GM12878 (cell line): ENCODE measurements at regions of chr14 and their contacts with region 1.

Region 1: GRCh38 chr14:58969951-58970751 is 218.3 kb upstream of the DAAM1 start:
- DNase-seq: peak; percentile 43
- ATAC-seq: peak; percentile 86
- H3K4me3 ChIP-seq: no peak overlapping the region
- H3K27ac ChIP-seq: peak overlapping the region; percentile 43
- H3K4me1 ChIP-seq: peaks cover 4% of the 10 kb centered on the region; the same call in 1 of the 2 replicates
- H3K27me3 ChIP-seq: no peaks in the 10 kb centered on the region
- CTCF ChIP-seq: no peak
- EP300 ChIP-seq: no peak
- POLR2A ChIP-seq: 0 out of 2 replicates have a peak, but pooled peaks have one; percentile 16
- RAD21 ChIP-seq: no peak

Region 2: DNA sequence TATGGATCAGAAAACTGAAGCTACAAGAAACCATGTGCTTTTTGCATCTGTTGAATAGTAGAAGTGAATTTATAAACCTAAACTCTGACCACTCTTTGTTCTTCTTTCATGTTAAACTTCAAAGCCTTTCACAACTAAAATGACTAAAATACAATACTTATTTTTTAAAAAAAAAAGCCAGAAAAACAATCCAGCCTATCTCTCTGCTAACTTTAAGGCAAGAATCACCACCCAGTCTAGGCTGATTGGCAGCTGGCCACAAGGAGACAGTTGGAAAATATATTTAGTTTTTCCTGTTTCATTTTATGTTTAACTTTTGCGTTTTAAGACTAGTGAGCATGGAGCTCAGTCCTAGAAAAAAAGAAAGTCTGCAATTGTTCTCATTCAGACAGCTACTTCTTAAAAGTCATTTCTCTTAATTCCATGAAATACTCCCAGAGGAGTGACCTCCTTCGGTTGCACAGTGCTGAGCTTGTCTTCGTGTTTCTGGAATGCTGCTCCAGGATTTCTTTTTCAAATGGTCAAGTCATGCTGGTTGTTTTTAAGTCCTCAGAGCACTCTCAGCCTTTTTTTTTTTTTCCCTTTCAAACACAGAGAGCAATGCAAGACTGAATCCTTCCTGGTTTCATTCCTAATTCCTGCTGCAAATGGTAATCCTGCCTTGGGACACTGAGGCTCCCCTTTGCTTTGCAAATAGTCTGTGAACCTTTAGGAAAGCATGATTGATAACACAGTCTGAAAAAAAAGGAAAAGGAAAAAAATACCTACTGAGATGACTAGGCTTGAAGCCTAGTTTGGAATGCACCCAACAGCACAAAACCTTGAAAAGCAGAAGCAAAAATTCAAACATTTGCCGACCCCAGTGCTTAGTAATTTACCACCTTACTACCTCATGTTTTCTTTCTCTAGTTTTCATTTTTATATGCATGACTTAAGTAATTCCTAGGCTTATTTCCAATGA is 15.0 kb before region 1 on chr14:
- CTCF ChIA-PET with region 1: interaction called, 10 read pairs
- POLR2A ChIA-PET with region 1: interaction called, 58 read pairs
- RAD21 ChIA-PET with region 1: interaction called, 21 read pairs
- SMC1A ChIA-PET with region 1: interaction called, 86 read pairs
- in situ Hi-C with region 1: no loop called
- intact Hi-C with region 1: no loop called
- DNase-seq: peak; percentile 55
- ATAC-seq: peak; percentile 81
- H3K4me3 ChIP-seq: peak overlapping the region; percentile 38; the same call in 1 of the 2 replicates
- H3K27ac ChIP-seq: peak overlapping the region; percentile 86
- H3K4me1 ChIP-seq: peaks cover 18% of the 10 kb centered on the region
- H3K27me3 ChIP-seq: no peaks in the 10 kb centered on the region
- CTCF ChIP-seq: no peak
- EP300 ChIP-seq: peak; percentile 68 to 77; a peak in 3 of 4 replicates
- POLR2A ChIP-seq: no peak
- RAD21 ChIP-seq: no peak